Activated CD4-positive, alpha-beta memory T cell treated with anti-CD3 and anti-CD28 coated beads for 36 hours (primary cell): ENCODE measurements at regions of chr6 and their contacts with region 1.

Region 1: DNA sequence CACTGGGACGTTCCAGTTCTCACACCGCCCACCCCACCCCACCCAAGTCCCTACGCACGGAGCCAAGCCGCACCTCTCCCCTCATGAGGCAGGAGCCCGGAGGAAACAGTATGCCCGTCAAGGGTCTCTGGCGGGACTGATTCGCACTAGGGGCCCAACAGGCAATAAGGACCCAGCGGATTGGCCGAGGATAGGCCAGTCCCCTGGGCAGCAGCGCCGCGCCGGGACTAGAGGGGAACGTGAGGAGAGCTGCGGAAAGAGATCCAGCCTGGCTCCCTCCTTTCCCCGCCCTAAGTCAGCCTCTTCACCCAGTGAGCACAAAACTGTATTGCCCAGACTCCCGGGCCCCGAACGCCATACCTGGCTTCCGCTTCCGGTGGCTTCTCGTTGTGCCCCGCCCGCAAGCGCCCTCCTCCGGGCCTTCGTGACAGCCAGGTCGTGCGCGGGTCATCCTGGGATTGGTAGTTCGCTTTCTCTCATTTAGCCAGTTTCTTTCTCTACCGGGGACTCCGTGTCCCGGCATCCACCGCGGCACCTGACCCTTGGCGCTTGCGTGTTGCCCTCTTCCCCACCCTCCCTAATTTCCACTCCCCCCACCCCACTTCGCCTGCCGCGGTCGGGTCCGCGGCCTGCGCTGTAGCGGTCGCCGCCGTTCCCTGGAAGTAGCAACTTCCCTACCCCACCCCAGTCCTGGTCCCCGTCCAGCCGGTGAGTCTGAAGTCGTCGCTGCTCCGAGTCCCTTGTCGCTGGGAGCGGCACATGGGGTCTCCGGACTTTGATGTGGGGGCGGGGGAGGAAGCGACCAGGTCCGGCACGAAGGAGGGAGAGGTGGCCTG is at the start of gene CSNK2B:
- DNase-seq: peak; percentile 99
- H3K4me3 Mint-ChIP-seq: peak within 1 kb of the TSS; percentile 88
- H3K27ac Mint-ChIP-seq: peak within 1 kb of the TSS; percentile 95
- H3K4me1 Mint-ChIP-seq: peaks cover 61% of the 10 kb centered on the region
- H3K27me3 Mint-ChIP-seq: no peaks in the 10 kb centered on the region
- total RNA-seq, gene CSNK2B: 227 to 234 TPM

Region 2: DNA sequence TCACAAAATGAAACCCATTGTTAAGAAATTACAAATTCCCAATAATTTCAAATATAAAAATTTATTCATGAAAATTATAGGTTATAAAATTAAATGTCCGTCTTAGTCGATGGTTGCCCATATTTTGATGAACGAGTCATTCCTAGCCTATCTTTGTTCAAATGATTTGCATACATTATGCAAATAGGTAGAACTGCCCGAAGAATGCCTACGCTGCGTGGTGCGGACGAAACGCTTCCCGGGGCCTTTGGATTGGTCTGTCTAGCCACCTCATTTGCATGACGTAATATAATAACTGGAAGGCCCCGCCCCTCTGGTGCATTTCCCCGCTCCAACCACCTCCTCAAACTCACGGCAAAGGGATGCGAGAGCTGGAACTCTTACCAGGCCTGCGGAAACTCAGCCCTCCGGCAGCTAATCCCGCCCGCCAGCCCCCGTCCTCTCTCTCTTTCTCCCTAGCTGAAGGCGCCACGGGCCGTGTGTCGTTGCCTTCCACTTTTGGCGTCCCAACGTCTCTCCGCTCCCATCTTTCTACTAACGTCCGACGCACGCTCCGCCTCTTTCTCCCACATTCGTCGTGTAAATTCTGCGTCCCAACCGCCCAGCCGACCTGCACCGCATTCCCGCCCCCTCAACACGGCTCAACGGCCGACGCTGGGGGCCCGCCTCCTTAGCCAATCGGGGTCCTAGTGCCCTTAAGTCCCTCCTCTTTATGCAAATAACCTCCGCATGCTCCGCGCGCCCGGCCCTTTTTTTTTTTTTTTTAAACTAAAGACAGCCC is 45.7 kb before region 1 on chr6:
- CTCF ChIA-PET with region 1: no interaction called
- POLR2A ChIA-PET with region 1: interaction called, 8 read pairs
- intact Hi-C with region 1: loop called (anchors 1 kb)
- DNase-seq: peak; percentile 98
- H3K4me3 Mint-ChIP-seq: peak overlapping the region; percentile 91
- H3K27ac Mint-ChIP-seq: peak overlapping the region; percentile 98
- H3K4me1 Mint-ChIP-seq: peaks cover 47% of the 10 kb centered on the region
- H3K27me3 Mint-ChIP-seq: no peaks in the 10 kb centered on the region

Region 3: DNA sequence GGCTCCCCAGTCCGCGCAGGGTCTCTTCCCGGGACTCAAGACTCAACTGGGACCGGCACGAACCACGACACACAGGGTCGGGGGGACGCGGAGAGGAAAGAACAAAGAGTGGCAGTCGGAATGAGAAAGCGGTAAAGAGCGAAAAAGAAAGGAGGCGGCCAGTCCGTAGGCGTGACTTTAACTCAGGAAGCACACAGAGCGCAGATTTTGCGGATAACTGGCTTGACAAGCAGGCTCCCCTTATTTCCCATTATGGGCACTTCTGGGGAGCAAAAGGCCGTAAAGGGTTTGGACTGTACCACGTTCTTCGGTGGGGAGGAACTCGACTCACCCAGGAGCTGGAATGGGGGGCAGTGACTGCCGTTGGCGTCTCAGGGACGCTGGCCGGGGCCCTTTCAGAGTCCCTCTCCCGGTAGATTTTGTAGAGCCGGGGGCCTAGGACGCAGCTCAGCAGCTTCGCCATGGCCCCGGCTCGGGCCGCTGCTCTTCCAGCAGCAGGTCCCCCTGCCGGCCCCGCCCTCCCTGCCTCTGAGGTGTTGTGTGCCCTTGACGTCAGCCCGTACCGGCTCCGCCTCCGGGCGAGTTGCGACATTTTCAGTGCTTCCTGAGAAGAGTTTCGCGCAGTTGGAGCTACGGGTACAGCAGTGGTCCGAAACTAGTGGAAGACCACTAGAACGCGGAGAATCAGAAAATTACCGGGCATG is 37.3 kb after region 1 on chr6 and contains the start of gene ABHD16A:
- CTCF ChIA-PET with region 1: no interaction called
- POLR2A ChIA-PET with region 1: interaction called, 3 read pairs
- intact Hi-C with region 1: loop called (anchors 2 kb)
- DNase-seq: peak; percentile 99
- H3K4me3 Mint-ChIP-seq: peak within 1 kb of the TSS; percentile 99
- H3K27ac Mint-ChIP-seq: peak within 1 kb of the TSS; percentile 97
- H3K4me1 Mint-ChIP-seq: peaks cover 18% of the 10 kb centered on the region
- H3K27me3 Mint-ChIP-seq: no peaks in the 10 kb centered on the region
- total RNA-seq, gene ABHD16A: 29.1 to 29.6 TPM

Region 4: DNA sequence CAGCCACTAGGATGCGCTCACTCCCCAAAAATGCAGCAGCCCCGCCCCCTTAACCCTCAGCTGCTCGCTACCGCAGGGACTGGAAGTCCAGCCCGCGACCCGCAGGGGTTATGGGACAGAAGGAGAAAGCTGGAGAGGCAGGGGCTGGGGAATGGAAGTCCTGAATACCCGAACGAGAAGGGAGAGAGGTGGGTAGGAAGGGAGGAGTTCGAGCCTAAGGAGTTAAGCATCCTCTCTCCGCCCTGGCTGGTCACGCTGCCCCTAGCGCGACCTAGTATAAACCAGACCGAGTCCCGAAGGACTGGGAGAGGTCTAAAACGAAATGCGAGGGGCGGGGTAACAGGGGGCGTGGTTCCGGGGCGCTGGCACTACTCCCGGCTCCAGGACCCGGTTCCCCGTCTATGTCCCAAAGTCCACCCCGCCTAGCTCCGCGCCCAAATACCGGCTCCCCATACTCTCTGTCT is 63.8 kb after region 1 on chr6:
- CTCF ChIA-PET with region 1: no interaction called
- POLR2A ChIA-PET with region 1: no interaction called
- intact Hi-C with region 1: no loop called
- DNase-seq: peak; percentile 84
- H3K4me3 Mint-ChIP-seq: peak overlapping the region; percentile 80
- H3K27ac Mint-ChIP-seq: peak overlapping the region; percentile 43
- H3K4me1 Mint-ChIP-seq: peaks cover 69% of the 10 kb centered on the region
- H3K27me3 Mint-ChIP-seq: no peaks in the 10 kb centered on the region

Region 5: GRCh38 chr6:31750411-31751022 is 84.8 kb after region 1 on chr6:
- CTCF ChIA-PET with region 1: no interaction called
- POLR2A ChIA-PET with region 1: no interaction called
- intact Hi-C with region 1: no loop called
- DNase-seq: no peak
- H3K4me3 Mint-ChIP-seq: no peak overlapping the region
- H3K27ac Mint-ChIP-seq: no peak overlapping the region
- H3K4me1 Mint-ChIP-seq: no peaks in the 10 kb centered on the region
- H3K27me3 Mint-ChIP-seq: no peaks in the 10 kb centered on the region

Region 6: DNA sequence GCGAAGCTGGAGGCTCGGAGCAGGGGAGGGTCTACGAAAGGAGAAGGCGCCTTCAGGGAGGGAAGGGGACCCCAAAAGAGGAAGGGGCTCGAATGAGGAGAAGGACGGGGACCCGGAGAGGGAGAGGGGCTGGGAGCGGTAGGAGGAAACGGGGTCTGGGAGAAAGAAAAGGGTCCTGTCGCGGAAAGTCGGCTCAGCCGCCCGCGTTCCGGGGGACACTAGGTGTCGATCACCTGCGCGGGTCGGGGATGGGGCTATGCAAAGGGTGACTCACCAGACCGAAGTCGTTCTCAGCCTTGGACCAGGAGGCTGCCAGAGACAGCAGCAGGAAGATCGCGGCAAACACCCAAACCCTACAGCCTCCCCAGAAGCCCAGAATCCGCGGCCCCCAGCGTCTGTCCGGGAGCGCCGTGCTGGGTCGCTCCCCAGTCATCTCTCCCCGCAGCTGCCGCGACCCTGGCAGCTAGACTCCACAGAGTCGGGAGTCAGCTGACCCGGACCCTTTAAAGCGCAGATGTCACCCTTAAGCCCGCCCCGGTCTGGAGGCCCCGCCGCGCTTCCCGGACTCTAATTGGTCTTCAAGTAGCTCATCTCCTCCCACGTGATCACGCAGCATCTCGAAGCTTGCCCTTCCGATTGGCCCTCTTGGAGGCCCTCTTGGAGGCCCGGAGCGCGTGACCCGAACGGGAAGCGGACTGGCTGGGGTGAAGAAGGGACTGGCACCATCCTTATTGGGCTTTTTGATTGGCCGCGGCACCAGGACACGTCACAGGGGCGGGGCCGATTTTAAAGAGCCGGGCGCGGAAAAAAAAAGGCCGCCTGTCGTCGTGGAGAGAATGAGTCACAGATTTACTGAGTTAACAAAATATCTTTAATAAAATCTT is 196.9 kb after region 1 on chr6 and contains the start of gene NEU1:
- CTCF ChIA-PET with region 1: no interaction called
- POLR2A ChIA-PET with region 1: interaction called, 11 read pairs
- intact Hi-C with region 1: loop called (anchors 1 kb)
- DNase-seq: peak; percentile 100
- H3K4me3 Mint-ChIP-seq: peak within 1 kb of the TSS; percentile 95
- H3K27ac Mint-ChIP-seq: peak within 1 kb of the TSS; percentile 89
- H3K4me1 Mint-ChIP-seq: peaks cover 20% of the 10 kb centered on the region
- H3K27me3 Mint-ChIP-seq: peaks cover 2% of the 10 kb centered on the region
- total RNA-seq, gene NEU1: 13.0 to 13.4 TPM

Region 7: GRCh38 chr6:31958741-31959739 is 293.3 kb after region 1 on chr6 and contains the starts of genes NELFE and SKIC2:
- CTCF ChIA-PET with region 1: no interaction called
- POLR2A ChIA-PET with region 1: no interaction called
- intact Hi-C with region 1: loop called (anchors 2 kb)
- DNase-seq: peak; percentile 99
- H3K4me3 Mint-ChIP-seq: peak within 1 kb of the TSS; percentile 99
- H3K27ac Mint-ChIP-seq: peak within 1 kb of the TSS; percentile 98
- H3K4me1 Mint-ChIP-seq: peaks cover 43% of the 10 kb centered on the region
- H3K27me3 Mint-ChIP-seq: no peaks in the 10 kb centered on the region
- total RNA-seq, gene NELFE: 87.1 to 89.0 TPM
- total RNA-seq, gene SKIC2: 95.7 to 101 TPM